ENCODE measurements at regions of chr2 and their contacts with region 1.

Region 1: DNA sequence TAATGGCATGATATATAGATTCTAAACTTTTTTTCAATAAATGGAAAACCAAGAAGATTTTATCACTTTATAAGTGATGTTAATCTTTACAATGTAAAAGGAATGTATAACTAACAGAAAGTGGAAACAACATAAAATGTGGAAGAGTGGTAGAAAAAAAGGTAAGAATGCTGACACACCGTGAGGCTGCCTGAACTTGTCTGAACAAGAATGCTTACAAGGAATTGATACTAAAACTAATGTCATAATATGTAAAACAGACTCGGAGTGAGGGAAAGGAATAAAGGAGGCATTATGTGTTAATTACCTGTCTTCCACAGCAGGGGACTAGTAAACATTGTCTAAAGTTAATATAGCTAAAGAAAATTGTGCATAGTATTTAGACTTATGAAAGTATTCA is 958.8 kb upstream of the TMEFF2 start:
- DNase-seq: no peak
- ATAC-seq: no peak
- H3K4me3 ChIP-seq: no peak overlapping the region
- H3K4me3 Mint-ChIP-seq: no peak overlapping the region
- H3K27ac ChIP-seq: no peak overlapping the region
- H3K27ac Mint-ChIP-seq: no peak overlapping the region
- H3K4me1 ChIP-seq: no peaks in the 10 kb centered on the region
- H3K4me1 Mint-ChIP-seq: no peaks in the 10 kb centered on the region
- H3K27me3 ChIP-seq: no peaks in the 10 kb centered on the region
- H3K27me3 Mint-ChIP-seq: no peaks in the 10 kb centered on the region

Region 2: DNA sequence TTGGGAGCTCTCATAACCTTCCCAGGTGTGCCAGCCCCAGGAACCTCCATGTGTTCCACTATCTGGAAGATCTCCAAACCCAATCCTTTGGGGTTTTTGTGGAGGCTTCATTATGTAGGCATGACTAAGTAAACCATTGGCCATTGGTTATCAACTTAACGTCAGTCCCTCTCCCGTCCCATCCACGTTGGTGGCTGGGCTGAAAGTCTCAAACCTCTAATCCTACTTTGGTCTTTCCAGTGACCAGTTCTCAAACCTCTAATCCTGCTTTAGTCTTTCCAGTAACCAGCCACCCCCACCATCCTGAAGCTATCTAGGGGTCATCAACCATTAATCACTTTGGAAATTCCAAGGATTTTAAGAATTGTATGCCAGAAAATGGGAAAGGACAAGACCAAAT is 254.1 kb before region 1 on chr2:
- CTCF ChIA-PET with region 1: no interaction called
- POLR2A ChIA-PET with region 1: no interaction called
- DNase-seq: no peak
- ATAC-seq: no peak
- H3K4me3 ChIP-seq: no peak overlapping the region
- H3K4me3 Mint-ChIP-seq: no peak overlapping the region
- H3K27ac ChIP-seq: no peak overlapping the region
- H3K27ac Mint-ChIP-seq: no peak overlapping the region
- H3K4me1 ChIP-seq: no peaks in the 10 kb centered on the region
- H3K4me1 Mint-ChIP-seq: no peaks in the 10 kb centered on the region
- H3K27me3 ChIP-seq: no peaks in the 10 kb centered on the region
- H3K27me3 Mint-ChIP-seq: no peaks in the 10 kb centered on the region

Region 3: GRCh38 chr2:193124815-193125214 is 28.8 kb before region 1 on chr2:
- CTCF ChIA-PET with region 1: no interaction called
- POLR2A ChIA-PET with region 1: no interaction called
- DNase-seq: no peak
- ATAC-seq: no peak
- H3K4me3 ChIP-seq: no peak overlapping the region
- H3K4me3 Mint-ChIP-seq: no peak overlapping the region
- H3K27ac ChIP-seq: no peak overlapping the region
- H3K27ac Mint-ChIP-seq: no peak overlapping the region
- H3K4me1 ChIP-seq: no peaks in the 10 kb centered on the region
- H3K4me1 Mint-ChIP-seq: no peaks in the 10 kb centered on the region
- H3K27me3 ChIP-seq: no peaks in the 10 kb centered on the region
- H3K27me3 Mint-ChIP-seq: no peaks in the 10 kb centered on the region

Region 4: DNA sequence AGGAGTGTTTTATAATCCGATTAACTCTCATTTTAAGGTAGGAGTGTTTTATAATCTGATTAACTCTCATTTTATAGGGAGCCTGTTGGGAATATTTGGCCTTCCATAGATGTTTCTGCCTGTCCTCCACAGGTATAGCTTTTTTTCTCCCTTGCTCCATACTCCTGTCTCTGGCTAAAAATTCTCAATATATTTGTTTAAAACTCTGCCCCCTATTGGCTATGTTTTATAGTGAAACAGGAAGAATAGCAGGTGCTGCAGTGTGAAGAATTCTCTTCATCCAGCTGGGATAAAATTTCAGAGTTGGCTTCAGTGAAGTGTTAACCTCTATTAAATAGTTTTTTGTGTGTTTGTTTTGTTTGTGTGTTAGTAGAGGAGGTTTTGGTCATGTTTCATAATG is 87.2 kb after region 1 on chr2:
- CTCF ChIA-PET with region 1: no interaction called
- POLR2A ChIA-PET with region 1: no interaction called
- DNase-seq: no peak
- ATAC-seq: no peak
- H3K4me3 ChIP-seq: no peak overlapping the region
- H3K4me3 Mint-ChIP-seq: no peak overlapping the region
- H3K27ac ChIP-seq: no peak overlapping the region
- H3K27ac Mint-ChIP-seq: no peak overlapping the region
- H3K4me1 ChIP-seq: no peaks in the 10 kb centered on the region
- H3K4me1 Mint-ChIP-seq: no peaks in the 10 kb centered on the region
- H3K27me3 ChIP-seq: no peaks in the 10 kb centered on the region
- H3K27me3 Mint-ChIP-seq: no peaks in the 10 kb centered on the region

Region 5: GRCh38 chr2:193331676-193332075 is 178.1 kb after region 1 on chr2:
- CTCF ChIA-PET with region 1: no interaction called
- POLR2A ChIA-PET with region 1: interaction called in 1 of 2 experiments, 11 read pairs
- DNase-seq: no peak
- ATAC-seq: no peak
- H3K4me3 ChIP-seq: no peak overlapping the region
- H3K4me3 Mint-ChIP-seq: no peak overlapping the region
- H3K27ac ChIP-seq: no peak overlapping the region
- H3K27ac Mint-ChIP-seq: no peak overlapping the region
- H3K4me1 ChIP-seq: no peaks in the 10 kb centered on the region
- H3K4me1 Mint-ChIP-seq: peaks cover 0 to 4% (median 2%) of the 10 kb centered on the region in 3 donors
- H3K27me3 ChIP-seq: no peaks in the 10 kb centered on the region
- H3K27me3 Mint-ChIP-seq: no peaks in the 10 kb centered on the region